Dorsolateral prefrontal cortex (tissue), 120 donors: ENCODE measurements at regions of chr2 and their contacts with region 1.

Region 1: DNA sequence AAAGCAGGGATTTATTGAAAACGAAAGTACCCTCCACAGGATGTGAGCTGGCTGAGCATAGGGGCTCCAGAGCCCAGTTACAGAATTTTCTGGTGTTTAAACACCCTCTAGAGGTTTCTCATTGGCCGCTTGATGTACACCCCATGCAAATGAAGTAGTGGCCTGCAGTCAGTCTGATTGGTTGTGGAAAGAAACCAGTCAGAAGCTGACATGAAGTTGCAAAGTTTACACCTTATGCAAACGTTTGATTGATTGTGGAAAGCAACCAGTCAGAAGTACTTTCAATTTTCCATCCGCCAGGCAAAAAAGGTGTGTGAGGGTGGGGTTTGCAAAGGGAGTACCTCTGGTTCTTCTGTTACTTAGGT is 62.3 kb downstream of the VWA3B start:
- DNase-seq: no peak
- H3K4me3 ChIP-seq: peak overlapping the region in 53 of 59 donors; percentile 2 to 58 (median 38)
- H3K27ac ChIP-seq: peak overlapping the region in 51 of 59 donors; percentile 6 to 86 (median 65)
- H3K27me3 ChIP-seq: no peaks in the 10 kb centered on the region
- CTCF ChIP-seq: peak in 43 of 56 donors; percentile 8 to 67 (median 37)

Region 2: GRCh38 chr2:97806738-97807618 is 342.3 kb before region 1 on chr2:
- intact Hi-C with region 1: loop called in 1 of 2 experiments (anchors 2 kb)
- DNase-seq: peak; percentile 78 to 88 (median 83)
- H3K4me3 ChIP-seq: no peak overlapping the region
- H3K27ac ChIP-seq: peak overlapping the region in 2 of 59 donors; percentile 20 to 36
- H3K27me3 ChIP-seq: no peaks in the 10 kb centered on the region
- CTCF ChIP-seq: peak; percentile 64 to 99 (median 93)

Region 3: DNA sequence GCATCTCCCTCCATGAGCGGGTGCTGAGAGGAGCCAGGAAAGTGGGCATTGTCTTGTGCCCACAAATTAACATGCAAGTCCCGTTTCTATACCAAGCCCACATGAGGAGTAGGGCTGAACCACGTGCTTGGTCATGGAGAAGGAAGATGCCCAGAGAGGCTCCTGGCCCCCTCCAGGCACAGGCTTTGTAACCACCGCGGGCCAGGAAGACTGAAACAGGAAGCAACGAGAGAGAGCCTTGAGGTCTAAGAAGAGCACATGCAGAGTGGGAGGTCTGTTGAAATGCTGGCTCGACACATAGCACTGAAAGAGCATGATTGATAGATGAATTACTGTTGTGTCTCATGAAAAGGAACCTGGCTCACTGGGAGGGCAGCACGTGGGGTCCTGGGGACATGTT is 26.0 kb before region 1 on chr2:
- intact Hi-C with region 1: no loop called
- DNase-seq: no peak
- H3K4me3 ChIP-seq: no peak overlapping the region
- H3K27ac ChIP-seq: no peak overlapping the region
- H3K27me3 ChIP-seq: no peaks in the 10 kb centered on the region
- CTCF ChIP-seq: no peak

Region 4: DNA sequence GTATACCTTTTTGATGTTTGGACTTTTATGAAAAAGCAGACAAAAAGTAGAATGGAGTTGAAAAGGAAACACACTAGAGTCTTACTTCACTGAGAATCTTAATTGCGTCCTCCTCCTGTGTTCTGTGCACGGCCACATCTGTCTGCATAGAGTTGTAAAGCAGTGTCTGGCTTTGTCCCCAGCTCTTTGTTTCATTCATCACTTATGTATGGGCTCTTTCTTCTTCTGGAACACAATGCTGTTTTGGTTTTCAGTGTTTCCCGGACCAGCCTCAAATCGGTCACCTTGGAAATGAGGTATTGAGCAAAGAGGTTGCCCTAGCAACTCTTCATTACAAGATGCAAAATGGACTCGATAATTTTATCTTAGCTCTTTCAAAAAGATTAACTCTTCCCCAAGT is 92.7 kb after region 1 on chr2:
- intact Hi-C with region 1: loop called in 1 of 2 experiments (anchors 5 kb)
- DNase-seq: peak in 4 of 10 donors; percentile 36 to 68 (median 48)
- H3K4me3 ChIP-seq: peak overlapping the region in 40 of 59 donors; percentile 0 to 52 (median 26)
- H3K27ac ChIP-seq: peak overlapping the region in 52 of 59 donors; percentile 3 to 87 (median 66)
- H3K27me3 ChIP-seq: no peaks in the 10 kb centered on the region
- CTCF ChIP-seq: peak in 8 of 56 donors; percentile 4 to 47 (median 18)

Region 5: DNA sequence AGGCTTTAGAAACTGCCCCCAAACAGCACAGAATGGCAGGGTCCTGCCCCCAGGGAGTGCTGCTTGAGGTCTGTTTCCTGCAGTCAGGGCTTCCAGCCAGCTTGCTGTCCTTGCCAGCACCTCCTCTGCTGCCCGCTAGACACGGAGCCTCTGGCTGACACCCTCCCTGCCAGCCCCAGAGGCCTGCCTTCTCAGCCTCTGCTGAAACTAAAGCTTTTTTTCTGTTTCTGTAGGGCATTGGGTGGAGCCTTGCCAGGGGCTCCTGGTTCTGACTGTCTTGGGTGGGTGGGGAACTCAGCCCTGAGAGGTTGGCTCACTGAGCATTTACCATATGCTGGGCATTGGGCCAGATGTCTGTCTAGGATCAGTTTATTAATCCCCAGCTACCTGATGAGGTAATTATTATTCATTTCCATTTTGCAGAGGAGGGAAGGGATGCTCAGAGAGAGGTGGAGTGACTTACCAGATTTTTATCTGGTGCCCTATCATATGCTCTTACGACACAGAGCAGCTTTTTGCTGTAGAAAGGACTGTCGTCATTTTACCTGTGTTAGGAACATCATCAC is 330.7 kb after region 1 on chr2:
- intact Hi-C with region 1: no loop called
- DNase-seq: peak in 3 of 10 donors; percentile 25 to 68 (median 46)
- H3K4me3 ChIP-seq: no peak overlapping the region
- H3K27ac ChIP-seq: peak overlapping the region in 4 of 59 donors; percentile 8 to 60 (median 28)
- H3K27me3 ChIP-seq: no peaks in the 10 kb centered on the region
- CTCF ChIP-seq: no peak